CD8-positive, alpha-beta T cell (primary cell): ENCODE measurements at regions of chr5 and their contacts with region 1.

Region 1: DNA sequence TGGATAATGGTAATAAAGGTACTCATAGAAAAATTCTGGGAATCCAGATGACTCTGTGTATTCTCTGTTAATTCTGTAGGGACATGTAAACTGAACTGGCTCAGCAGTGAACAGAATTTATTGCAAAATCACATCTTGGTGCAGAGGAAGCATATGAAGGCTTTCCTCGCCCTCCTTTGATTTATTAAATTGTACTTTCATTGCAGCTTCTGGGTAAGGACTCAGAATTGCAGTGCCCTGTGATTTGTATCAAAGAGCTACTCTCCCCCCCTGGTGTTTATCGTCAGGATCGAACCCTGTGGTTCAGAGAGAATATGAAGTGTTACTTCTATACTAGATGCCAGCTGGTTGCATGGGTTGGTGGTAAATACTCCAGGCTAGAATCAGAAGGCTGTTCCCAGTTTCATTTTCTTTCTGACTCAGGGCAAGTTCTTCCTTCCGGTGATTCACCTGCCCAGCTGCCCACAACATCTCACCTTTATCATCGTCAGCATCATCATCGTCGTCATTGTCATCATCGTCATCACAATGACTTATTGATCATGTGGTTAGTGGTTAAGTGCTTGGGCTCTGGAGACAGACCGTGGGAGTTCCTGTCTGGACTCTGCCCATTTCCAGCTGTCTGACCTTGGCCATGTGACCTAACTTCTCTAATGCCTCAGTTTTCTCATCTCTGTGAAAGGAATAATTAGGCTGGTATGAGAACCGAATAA is 238.8 kb downstream of the ARHGAP26 start:
- DNase-seq: peak; percentile 56 to 98 (median 63)
- ATAC-seq: peak; percentile 87
- H3K4me3 ChIP-seq: no peak overlapping the region
- H3K4me3 Mint-ChIP-seq: no peak overlapping the region
- H3K27ac ChIP-seq: peak overlapping the region; percentile 33 to 96
- H3K27ac Mint-ChIP-seq: peak overlapping the region; percentile 84
- H3K4me1 ChIP-seq: peaks cover 23% of the 10 kb centered on the region
- H3K4me1 Mint-ChIP-seq: peaks cover 46% of the 10 kb centered on the region
- H3K27me3 ChIP-seq: no peaks in the 10 kb centered on the region
- H3K27me3 Mint-ChIP-seq: no peaks in the 10 kb centered on the region
- CTCF ChIP-seq: no peak

Region 2: GRCh38 chr5:142922223-142922952 is 86.6 kb before region 1 on chr5:
- CTCF ChIA-PET with region 1: interaction called, 3 read pairs
- POLR2A ChIA-PET with region 1: interaction called, 5 read pairs
- intact Hi-C with region 1: loop called (anchors 1 to 2 kb)
- DNase-seq: peak in 2 of 9 experiments; percentile 50 to 67
- ATAC-seq: no peak
- H3K4me3 ChIP-seq: no peak overlapping the region
- H3K4me3 Mint-ChIP-seq: no peak overlapping the region
- H3K27ac ChIP-seq: peak overlapping the region in 1 of 2 experiments; percentile 21
- H3K27ac Mint-ChIP-seq: peak overlapping the region; percentile 37
- H3K4me1 ChIP-seq: peaks cover 7% of the 10 kb centered on the region
- H3K4me1 Mint-ChIP-seq: peaks cover 34% of the 10 kb centered on the region
- H3K27me3 ChIP-seq: no peaks in the 10 kb centered on the region
- H3K27me3 Mint-ChIP-seq: no peaks in the 10 kb centered on the region
- CTCF ChIP-seq: no peak

Region 3: GRCh38 chr5:142977363-142978051 is 31.5 kb before region 1 on chr5:
- CTCF ChIA-PET with region 1: interaction called, 8 read pairs
- POLR2A ChIA-PET with region 1: no interaction called
- intact Hi-C with region 1: loop called in 1 of 2 experiments (anchors 1 kb)
- DNase-seq: peak; percentile 22 to 93 (median 60)
- ATAC-seq: peak; percentile 94
- H3K4me3 ChIP-seq: no peak overlapping the region
- H3K4me3 Mint-ChIP-seq: peak overlapping the region; percentile 59
- H3K27ac ChIP-seq: peak overlapping the region; percentile 3 to 88
- H3K27ac Mint-ChIP-seq: peak overlapping the region; percentile 83
- H3K4me1 ChIP-seq: peaks cover 57% of the 10 kb centered on the region
- H3K4me1 Mint-ChIP-seq: peaks cover 80% of the 10 kb centered on the region
- H3K27me3 ChIP-seq: no peaks in the 10 kb centered on the region
- H3K27me3 Mint-ChIP-seq: no peaks in the 10 kb centered on the region
- CTCF ChIP-seq: no peak